ENCODE measurements at regions of chr1 and their contacts with region 1.

Region 1: GRCh38 chr1:206612129-206612876 is at the start of gene EIF2D:
- DNase-seq: peak; percentile 58
- ATAC-seq: peak; percentile 82
- H3K4me3 ChIP-seq: peak within 1 kb of the TSS; percentile 83
- H3K27ac ChIP-seq: peak within 1 kb of the TSS; percentile 80
- H3K4me1 ChIP-seq: peaks cover 23% of the 10 kb centered on the region
- H3K27me3 ChIP-seq: no peaks in the 10 kb centered on the region
- CTCF ChIP-seq: peak; percentile 96 to 99 (median 98); a peak in 5 of 6 replicates
- EP300 ChIP-seq: peak in 1 of 2 experiments; percentile 37; a peak in 1 of 4 replicates
- POLR2A ChIP-seq: peak; percentile 100
- RAD21 ChIP-seq: peak; percentile 59
- polyA plus RNA-seq, gene EIF2D: 65.4 to 77.5 TPM

Region 2: GRCh38 chr1:205783904-205784303 is 828.4 kb before region 1 on chr1:
- CTCF ChIA-PET with region 1: no interaction called
- POLR2A ChIA-PET with region 1: no interaction called
- RAD21 ChIA-PET with region 1: no interaction called
- SMC1A ChIA-PET with region 1: no interaction called
- in situ Hi-C with region 1: no loop called
- intact Hi-C with region 1: no loop called
- DNase-seq: no peak
- ATAC-seq: no peak
- H3K4me3 ChIP-seq: no peak overlapping the region
- H3K27ac ChIP-seq: no peak overlapping the region
- H3K4me1 ChIP-seq: no peaks in the 10 kb centered on the region
- H3K27me3 ChIP-seq: peaks cover 0 to 6% of the 10 kb centered on the region in 2 experiments; a peak in 1 of 4 replicates
- CTCF ChIP-seq: no peak
- EP300 ChIP-seq: no peak
- POLR2A ChIP-seq: no peak
- RAD21 ChIP-seq: no peak

Region 3: GRCh38 chr1:206479183-206480125 is 132.8 kb before region 1 on chr1:
- CTCF ChIA-PET with region 1: interaction called, 16 read pairs
- POLR2A ChIA-PET with region 1: no interaction called
- RAD21 ChIA-PET with region 1: interaction called, 4 read pairs
- SMC1A ChIA-PET with region 1: interaction called, 4 read pairs
- in situ Hi-C with region 1: no loop called
- intact Hi-C with region 1: no loop called
- DNase-seq: no peak
- ATAC-seq: peak; percentile 77
- H3K4me3 ChIP-seq: no peak overlapping the region
- H3K27ac ChIP-seq: no peak overlapping the region
- H3K4me1 ChIP-seq: peaks cover 17% of the 10 kb centered on the region
- H3K27me3 ChIP-seq: no peaks in the 10 kb centered on the region
- CTCF ChIP-seq: peak; percentile 77 to 87 (median 84)
- EP300 ChIP-seq: no peak
- POLR2A ChIP-seq: no peak
- RAD21 ChIP-seq: peak; percentile 80

Region 4: GRCh38 chr1:206507284-206508129 is 104.8 kb before region 1 on chr1 and contains the start of gene RASSF5:
- CTCF ChIA-PET with region 1: interaction called, 11 read pairs
- POLR2A ChIA-PET with region 1: interaction called, 4 read pairs
- RAD21 ChIA-PET with region 1: interaction called, 4 read pairs
- SMC1A ChIA-PET with region 1: interaction called, 4 read pairs
- in situ Hi-C with region 1: no loop called
- intact Hi-C with region 1: no loop called
- DNase-seq: no peak
- ATAC-seq: peak; percentile 78
- H3K4me3 ChIP-seq: peak within 1 kb of the TSS; percentile 72
- H3K27ac ChIP-seq: peak within 1 kb of the TSS; percentile 29; the same call in 1 of the 2 replicates
- H3K4me1 ChIP-seq: peaks cover 41% of the 10 kb centered on the region
- H3K27me3 ChIP-seq: no peaks in the 10 kb centered on the region
- CTCF ChIP-seq: no peak
- EP300 ChIP-seq: 0 out of 4 replicates have a peak, but pooled peaks of 1 of the 2 experiments have one; percentile 21
- POLR2A ChIP-seq: peak; percentile 83
- RAD21 ChIP-seq: no peak
- polyA plus RNA-seq, gene RASSF5: 14.0 to 25.4 TPM

Region 5: DNA sequence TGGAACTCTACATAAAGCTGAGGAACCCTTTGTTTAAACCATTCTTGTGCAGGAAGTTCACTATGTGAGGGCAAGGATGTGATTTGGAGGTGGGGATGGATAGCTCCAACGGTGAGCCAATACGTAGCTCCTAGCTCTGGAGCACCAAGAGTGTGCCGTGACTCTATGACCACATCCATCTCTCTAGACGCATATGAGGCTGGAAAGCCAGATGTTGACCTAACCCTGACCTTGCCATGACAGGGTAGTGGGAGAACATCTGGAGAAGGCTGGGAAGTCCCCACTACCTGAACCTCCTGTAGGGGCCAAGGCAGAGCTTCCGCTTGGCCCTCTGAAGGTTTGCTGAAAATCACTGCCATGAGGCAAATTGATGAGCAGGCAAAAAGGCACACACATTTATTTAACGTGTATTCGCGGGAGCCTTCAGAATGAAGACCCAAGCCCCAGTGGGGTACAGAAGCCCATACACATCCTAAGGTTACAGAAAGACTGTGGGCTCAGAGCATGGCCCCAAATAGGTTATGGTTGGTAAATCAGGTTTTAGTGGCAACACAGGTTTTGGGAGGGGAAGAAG is 43.4 kb before region 1 on chr1:
- CTCF ChIA-PET with region 1: no interaction called
- POLR2A ChIA-PET with region 1: no interaction called
- RAD21 ChIA-PET with region 1: no interaction called
- SMC1A ChIA-PET with region 1: no interaction called
- in situ Hi-C with region 1: no loop called
- intact Hi-C with region 1: no loop called
- DNase-seq: no peak
- ATAC-seq: no peak; the same call in 2 of the 3 replicates
- H3K4me3 ChIP-seq: no peak overlapping the region
- H3K27ac ChIP-seq: 0 out of 2 replicates have a peak overlapping the region, but pooled peaks have one; percentile 20
- H3K4me1 ChIP-seq: peaks cover 39% of the 10 kb centered on the region
- H3K27me3 ChIP-seq: no peaks in the 10 kb centered on the region
- CTCF ChIP-seq: no peak
- EP300 ChIP-seq: no peak
- POLR2A ChIP-seq: no peak
- RAD21 ChIP-seq: no peak

Region 6: GRCh38 chr1:206590025-206590758 is 22.1 kb before region 1 on chr1:
- CTCF ChIA-PET with region 1: interaction called, 15 read pairs
- POLR2A ChIA-PET with region 1: no interaction called
- RAD21 ChIA-PET with region 1: interaction called, 4 read pairs
- SMC1A ChIA-PET with region 1: interaction called, 9 read pairs
- in situ Hi-C with region 1: no loop called
- intact Hi-C with region 1: no loop called
- DNase-seq: no peak
- ATAC-seq: peak; percentile 89
- H3K4me3 ChIP-seq: no peak overlapping the region
- H3K27ac ChIP-seq: peak overlapping the region; percentile 34
- H3K4me1 ChIP-seq: peaks cover 6% of the 10 kb centered on the region; the same call in 1 of the 2 replicates
- H3K27me3 ChIP-seq: no peaks in the 10 kb centered on the region
- CTCF ChIP-seq: peak; percentile 38 to 58 (median 42); a peak in 5 of 6 replicates
- EP300 ChIP-seq: no peak
- POLR2A ChIP-seq: peak; percentile 48; the same call in 1 of the 2 replicates
- RAD21 ChIP-seq: 0 out of 2 replicates have a peak, but pooled peaks have one; percentile 26

Region 7: DNA sequence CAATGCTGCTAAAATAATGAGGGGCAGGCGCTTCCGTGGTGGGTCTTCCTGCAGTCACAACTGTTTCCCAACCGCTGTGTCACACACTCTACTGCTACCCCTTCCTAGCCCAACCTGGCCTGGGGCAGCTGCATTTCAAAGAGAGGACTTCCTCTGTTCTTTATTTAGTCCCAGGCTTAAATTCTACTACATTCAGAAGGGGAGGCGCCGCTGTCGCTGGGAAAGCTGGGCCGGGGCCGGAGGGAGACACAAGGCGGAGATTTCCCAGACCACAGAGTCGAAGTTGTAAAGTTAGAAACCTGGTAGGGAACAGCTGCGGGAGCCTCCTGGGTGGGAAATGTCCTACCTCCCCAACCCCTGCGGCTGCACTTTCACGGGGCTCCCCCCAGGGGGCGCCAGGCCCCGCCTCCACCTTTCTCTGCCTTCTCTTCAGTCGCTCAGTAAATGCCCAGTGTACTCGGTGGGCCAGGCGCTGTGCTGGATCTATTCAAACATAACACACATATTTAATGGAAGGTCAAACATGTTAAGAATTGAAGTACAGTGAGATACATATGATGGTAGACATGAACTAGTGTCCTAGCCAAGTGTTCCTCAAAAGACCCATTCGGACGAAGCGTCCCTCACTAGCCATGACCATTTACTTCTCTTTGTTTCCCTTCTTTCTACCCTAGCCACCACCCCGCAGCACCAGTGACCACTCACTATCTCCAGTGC is 46.1 kb after region 1 on chr1:
- CTCF ChIA-PET with region 1: interaction called, 197 read pairs
- POLR2A ChIA-PET with region 1: interaction called, 5 read pairs
- RAD21 ChIA-PET with region 1: interaction called, 45 read pairs
- SMC1A ChIA-PET with region 1: interaction called, 70 read pairs
- in situ Hi-C with region 1: no loop called
- intact Hi-C with region 1: no loop called
- DNase-seq: no peak
- ATAC-seq: peak; percentile 93
- H3K4me3 ChIP-seq: no peak overlapping the region
- H3K27ac ChIP-seq: no peak overlapping the region
- H3K4me1 ChIP-seq: peaks cover 9% of the 10 kb centered on the region
- H3K27me3 ChIP-seq: no peaks in the 10 kb centered on the region
- CTCF ChIP-seq: peak; percentile 74 to 99 (median 98)
- EP300 ChIP-seq: no peak
- POLR2A ChIP-seq: no peak
- RAD21 ChIP-seq: peak; percentile 62

Region 8: GRCh38 chr1:206716870-206717673 is 104.8 kb after region 1 on chr1:
- CTCF ChIA-PET with region 1: interaction called, 9 read pairs
- POLR2A ChIA-PET with region 1: interaction called, 13 read pairs
- RAD21 ChIA-PET with region 1: interaction called, 4 read pairs
- SMC1A ChIA-PET with region 1: interaction called, 3 read pairs
- in situ Hi-C with region 1: no loop called
- intact Hi-C with region 1: loop called (anchors 5 kb)
- DNase-seq: peak; percentile 88
- ATAC-seq: peak; percentile 78
- H3K4me3 ChIP-seq: 0 out of 2 replicates have a peak overlapping the region, but pooled peaks have one; percentile 19
- H3K27ac ChIP-seq: peak overlapping the region; percentile 73
- H3K4me1 ChIP-seq: peaks cover 74% of the 10 kb centered on the region
- H3K27me3 ChIP-seq: no peaks in the 10 kb centered on the region
- CTCF ChIP-seq: no peak
- EP300 ChIP-seq: peak in 1 of 2 experiments; percentile 34; a peak in 1 of 4 replicates
- POLR2A ChIP-seq: no peak
- RAD21 ChIP-seq: no peak